ENCODE measurements at regions of chr12 and their contacts with region 1.

Region 1: GRCh38 chr12:110718222-110718908 is 24.3 kb downstream of the PPP1CC start:
- DNase-seq: no peak
- CTCF ChIP-seq: no peak

Region 2: DNA sequence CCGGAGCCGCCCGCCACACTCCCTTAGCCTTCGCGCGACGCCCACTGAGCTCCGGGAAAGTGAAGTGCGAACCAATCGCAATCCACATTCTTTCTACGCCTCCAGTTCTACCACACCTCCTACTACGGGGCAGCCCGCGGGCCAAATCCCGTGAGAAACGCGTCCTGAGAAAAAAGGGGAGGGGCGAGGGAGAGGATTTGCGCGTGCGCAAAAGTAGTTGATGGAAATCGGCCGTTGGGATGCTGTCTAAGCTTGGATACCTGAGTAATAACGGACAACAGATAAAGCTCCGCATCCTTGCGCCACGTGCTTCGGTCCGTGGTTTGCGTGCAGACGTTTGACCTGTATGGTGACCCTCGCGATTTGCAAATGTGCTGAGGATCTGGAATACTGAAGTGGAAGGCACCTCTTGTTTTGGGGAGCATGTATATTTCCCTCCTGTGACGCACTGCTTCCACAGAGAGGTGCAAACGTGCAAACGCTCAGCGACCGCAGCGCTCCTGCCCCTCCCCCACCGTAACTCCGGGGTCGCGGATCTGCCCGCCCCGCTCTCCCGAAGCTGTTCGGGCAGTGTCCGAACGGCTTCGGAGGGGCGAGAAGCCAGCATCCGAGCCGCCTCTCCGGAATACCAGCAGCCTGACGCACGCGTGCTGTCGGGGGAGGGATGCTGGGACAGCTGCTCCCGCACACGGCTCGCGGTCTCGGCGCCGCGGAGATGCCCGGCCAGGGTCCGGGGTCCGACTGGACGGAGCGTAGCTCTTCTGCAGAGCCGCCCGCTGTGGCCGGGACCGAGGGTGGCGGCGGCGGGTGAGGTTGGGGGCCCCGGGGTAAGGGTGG is 249.9 kb before region 1 on chr12 and contains the starts of genes FAM216A and GPN3:
- CTCF ChIA-PET with region 1: no interaction called
- POLR2A ChIA-PET with region 1: no interaction called
- DNase-seq: peak; percentile 96
- CTCF ChIP-seq: no peak

Region 3: GRCh38 chr12:110750784-110751461 is 32.6 kb after region 1 on chr12:
- CTCF ChIA-PET with region 1: no interaction called
- POLR2A ChIA-PET with region 1: no interaction called
- DNase-seq: no peak
- CTCF ChIP-seq: no peak

Region 4: GRCh38 chr12:110776410-110776809 is 58.0 kb after region 1 on chr12:
- CTCF ChIA-PET with region 1: no interaction called
- POLR2A ChIA-PET with region 1: interaction called, 12 read pairs
- DNase-seq: peak; percentile 82
- CTCF ChIP-seq: no peak